GM10248 (cell line): ENCODE measurements at regions of chr7 and their contacts with region 1.

Region 1: GRCh38 chr7:74206589-74207120 is 3.2 kb upstream of the LAT2 start:
- DNase-seq: peak; percentile 87
- CTCF ChIP-seq: peak; percentile 96

Region 2: DNA sequence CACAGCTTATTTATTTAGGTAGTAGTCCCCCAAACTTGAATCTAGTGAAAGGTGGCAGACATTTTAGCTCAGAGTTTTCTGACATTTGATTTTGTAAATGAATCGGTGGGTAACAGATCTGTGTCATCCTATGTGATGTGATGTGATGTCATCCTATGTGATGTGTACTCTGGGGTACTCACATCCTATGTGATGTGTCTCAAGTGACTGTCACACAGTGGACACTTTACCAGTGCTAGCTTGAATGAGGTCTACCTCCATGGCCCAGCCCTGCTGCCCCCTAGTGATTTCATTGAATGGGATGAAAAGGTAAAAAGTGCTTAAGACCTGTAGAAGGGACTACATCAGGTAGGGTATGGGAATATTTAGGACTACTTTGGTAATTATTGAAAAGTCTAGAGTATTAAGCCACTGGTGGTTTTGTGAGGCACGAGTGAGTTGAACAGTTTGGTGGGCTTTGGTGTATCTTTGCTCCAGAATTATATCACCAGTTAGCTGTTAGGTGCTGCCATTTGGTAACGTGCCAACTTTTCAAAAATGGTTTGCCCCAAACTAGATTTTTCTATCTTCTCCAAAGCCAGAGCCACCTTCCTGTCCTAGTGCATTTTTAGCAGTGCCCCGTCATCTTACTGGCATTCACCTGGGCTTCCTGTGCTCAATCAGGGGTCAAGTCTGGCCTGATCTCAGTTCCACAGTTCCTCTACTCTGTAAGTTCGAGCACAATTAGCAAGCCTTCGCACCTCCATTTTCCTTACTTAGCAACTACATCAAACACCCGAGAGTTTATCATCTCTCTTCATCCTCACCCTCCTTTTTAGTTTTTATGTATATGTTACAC is 22.8 kb before region 1 on chr7:
- CTCF ChIA-PET with region 1: interaction called, 34 read pairs
- POLR2A ChIA-PET with region 1: interaction called, 3 read pairs
- DNase-seq: no peak
- CTCF ChIP-seq: peak; percentile 42

Region 3: GRCh38 chr7:74231232-74231590 is 24.6 kb after region 1 on chr7:
- CTCF ChIA-PET with region 1: interaction called, 29 read pairs
- POLR2A ChIA-PET with region 1: interaction called, 4 read pairs
- DNase-seq: peak; percentile 75
- CTCF ChIP-seq: no peak

Region 4: GRCh38 chr7:74281030-74281429 is 74.4 kb after region 1 on chr7:
- CTCF ChIA-PET with region 1: interaction called, 18 read pairs
- POLR2A ChIA-PET with region 1: no interaction called
- DNase-seq: no peak
- CTCF ChIP-seq: no peak

Region 5: DNA sequence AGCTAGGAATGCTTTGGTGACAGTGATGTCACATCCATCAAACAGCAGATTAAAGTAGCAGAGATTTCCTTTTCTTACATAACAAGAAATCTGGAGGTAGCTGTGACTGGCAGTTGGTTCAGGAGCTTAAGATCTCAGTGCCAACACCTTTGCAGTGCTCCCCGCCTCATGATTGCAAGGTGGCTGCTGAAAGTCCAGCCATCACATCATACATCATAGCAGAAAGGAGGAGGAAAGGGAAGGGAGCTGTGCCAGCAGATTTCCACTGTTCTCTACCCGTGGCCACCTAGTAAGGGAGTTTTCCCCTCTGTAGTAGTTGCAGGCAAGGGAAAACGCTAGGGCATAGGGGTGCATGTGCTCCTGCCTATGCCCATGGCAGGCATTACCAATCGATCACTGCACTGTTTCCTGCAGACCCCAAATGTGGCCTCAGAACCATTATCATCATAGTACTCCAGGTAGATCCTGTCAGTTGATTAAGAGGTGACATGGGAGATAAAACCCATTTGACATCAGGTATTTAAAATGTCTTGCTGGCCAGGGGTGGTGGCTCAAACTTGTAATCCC is 189.2 kb after region 1 on chr7:
- CTCF ChIA-PET with region 1: interaction called, 197 read pairs
- POLR2A ChIA-PET with region 1: interaction called, 4 read pairs
- DNase-seq: no peak
- CTCF ChIP-seq: no peak